ENCODE measurements at regions of chr10 and their contacts with region 1.

Region 1: DNA sequence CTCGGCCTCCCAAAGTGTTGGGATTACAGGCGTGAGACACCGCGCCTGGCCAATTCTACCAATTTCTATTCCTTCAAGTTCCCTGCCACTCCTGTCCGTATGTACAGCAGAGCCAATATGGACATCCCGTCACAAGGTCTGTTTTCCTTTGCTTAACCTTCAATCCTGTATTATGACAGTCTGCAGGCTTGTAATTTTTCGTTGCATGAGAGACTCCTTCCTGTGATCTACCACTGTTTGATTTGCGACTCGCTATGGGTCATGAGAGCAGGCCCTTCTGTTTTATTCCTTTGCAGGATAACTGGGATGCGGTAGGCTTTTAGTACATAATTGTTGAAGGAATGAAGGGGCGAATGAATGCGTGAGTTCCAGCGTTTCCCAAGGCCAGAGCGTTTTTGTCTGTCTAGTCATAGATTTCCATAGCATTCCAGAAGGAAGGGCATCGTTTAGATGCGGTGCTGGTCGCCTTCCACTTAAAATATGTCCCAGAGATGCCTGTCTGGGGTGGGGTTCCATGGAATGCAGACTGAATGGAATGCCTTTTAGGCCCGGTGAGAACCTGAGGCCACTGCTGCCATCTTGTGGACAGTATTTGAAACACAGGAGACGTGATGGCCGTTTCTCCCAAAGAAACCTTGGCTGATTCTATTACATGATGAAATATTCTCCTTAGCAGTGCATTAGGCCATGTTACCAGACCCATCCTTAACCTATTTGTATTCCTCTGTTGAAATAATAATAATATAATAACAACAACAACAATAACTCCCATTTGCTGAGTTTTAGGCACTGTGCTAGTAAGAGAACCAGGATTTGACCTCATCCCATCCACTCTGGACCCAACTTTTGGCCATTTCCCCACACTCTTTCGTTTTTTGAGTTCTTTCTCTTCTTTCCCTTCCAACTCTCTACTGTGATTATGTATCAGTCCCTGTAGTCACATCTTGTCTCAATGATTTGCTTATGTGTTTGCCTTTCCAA is 193.2 kb downstream of the MYOF start:
- DNase-seq: peak; percentile 71
- ATAC-seq: no peak
- H3K4me3 Mint-ChIP-seq: no peak overlapping the region
- H3K27ac Mint-ChIP-seq: no peak overlapping the region
- H3K4me1 Mint-ChIP-seq: peaks cover 2% of the 10 kb centered on the region
- H3K27me3 Mint-ChIP-seq: peaks cover 2% of the 10 kb centered on the region

Region 2: DNA sequence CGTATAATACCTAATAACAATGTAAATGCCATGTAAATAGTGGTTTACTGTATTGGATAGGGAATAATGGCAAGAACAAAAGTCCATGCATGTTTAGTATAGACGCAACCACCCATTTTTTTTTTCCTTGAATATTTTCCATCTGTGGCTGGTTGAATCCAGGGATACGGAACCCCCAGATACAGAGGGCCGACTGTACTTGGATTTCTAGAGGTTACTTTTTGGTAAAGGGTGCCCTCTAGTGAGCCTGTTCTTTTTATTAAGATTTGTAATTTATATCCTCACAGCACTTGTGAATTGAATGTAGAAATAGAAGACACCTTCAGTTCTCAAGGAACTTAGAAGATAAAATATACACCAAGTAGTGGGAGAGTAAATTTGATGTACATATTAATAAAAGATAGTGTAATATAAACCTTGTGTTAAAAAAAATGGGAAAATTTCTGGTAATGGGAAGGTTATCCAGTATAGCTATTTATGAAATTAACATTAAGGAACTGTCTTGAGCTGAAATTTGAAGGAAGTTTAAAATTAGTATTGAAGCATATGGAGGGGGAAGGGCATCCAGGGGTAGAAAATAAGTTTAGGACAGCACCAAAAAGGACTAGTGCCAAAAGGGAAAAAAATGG is 408.6 kb before region 1 on chr10:
- CTCF ChIA-PET with region 1: no interaction called
- POLR2A ChIA-PET with region 1: no interaction called
- intact Hi-C with region 1: loop called in 1 of 2 experiments (anchors 10 kb)
- DNase-seq: no peak
- ATAC-seq: no peak
- H3K4me3 Mint-ChIP-seq: no peak overlapping the region
- H3K27ac Mint-ChIP-seq: no peak overlapping the region
- H3K4me1 Mint-ChIP-seq: peaks cover 27% of the 10 kb centered on the region
- H3K27me3 Mint-ChIP-seq: no peaks in the 10 kb centered on the region

Region 3: DNA sequence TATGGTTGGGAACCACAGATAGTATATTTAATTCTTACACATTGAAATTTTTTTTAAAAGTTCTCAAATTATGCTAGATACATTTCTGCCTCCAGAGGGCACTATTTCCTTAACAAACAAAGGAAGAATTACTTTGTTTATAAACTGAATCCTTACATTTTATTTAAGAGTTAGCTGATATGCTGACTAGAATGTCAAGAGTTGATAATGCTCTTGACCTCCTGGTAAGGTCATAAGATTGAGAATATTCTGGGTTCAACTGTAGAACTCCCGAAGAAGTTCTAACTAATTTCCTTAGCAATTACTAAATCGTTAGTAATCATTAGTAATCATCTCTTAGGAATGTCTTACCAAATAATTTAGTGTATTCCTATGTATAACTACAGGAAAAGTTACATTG is 323.6 kb before region 1 on chr10:
- CTCF ChIA-PET with region 1: interaction called, 3 read pairs
- POLR2A ChIA-PET with region 1: no interaction called
- intact Hi-C with region 1: loop called in 1 of 2 experiments (anchors 1 kb)
- DNase-seq: no peak
- ATAC-seq: no peak
- H3K4me3 Mint-ChIP-seq: no peak overlapping the region
- H3K27ac Mint-ChIP-seq: no peak overlapping the region
- H3K4me1 Mint-ChIP-seq: no peaks in the 10 kb centered on the region
- H3K27me3 Mint-ChIP-seq: no peaks in the 10 kb centered on the region

Region 4: DNA sequence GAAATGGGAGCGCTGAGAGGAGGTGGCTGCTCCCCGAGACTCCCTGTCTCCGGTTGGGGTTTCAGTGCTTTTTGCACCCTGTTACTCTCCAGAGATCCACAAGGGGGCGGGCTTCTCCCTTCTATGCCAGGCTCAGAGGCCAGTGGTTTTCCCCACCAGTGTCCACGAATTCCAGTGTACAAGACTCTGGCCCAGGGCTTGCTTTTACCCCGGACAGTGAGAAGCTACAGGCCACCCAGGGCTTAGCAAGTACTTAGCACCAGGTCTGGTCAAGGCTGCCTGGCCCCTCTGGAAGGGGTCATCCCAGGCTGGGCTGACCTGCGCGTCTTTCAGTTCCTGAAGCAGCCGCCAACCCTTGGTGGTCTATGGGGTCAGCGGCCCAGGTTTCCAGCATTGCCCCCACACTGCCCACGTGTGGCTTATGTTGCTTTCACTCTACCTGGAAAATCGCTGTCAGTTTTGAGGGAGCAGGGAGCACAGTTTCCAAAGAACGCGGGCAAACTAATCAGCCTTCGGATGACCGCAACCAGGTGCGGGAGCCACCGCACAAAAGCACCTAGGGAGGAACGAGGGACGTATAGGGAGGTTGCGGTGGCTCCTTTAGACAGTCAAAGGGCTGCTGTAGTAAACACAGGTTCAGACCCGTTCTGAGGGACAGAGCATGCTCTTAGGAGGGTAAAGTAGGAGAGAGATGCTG is 208.4 kb before region 1 on chr10:
- CTCF ChIA-PET with region 1: interaction called, 8 read pairs
- POLR2A ChIA-PET with region 1: no interaction called
- intact Hi-C with region 1: loop called (anchors 1 kb)
- DNase-seq: peak; percentile 72
- ATAC-seq: peak; percentile 70
- H3K4me3 Mint-ChIP-seq: no peak overlapping the region
- H3K27ac Mint-ChIP-seq: no peak overlapping the region
- H3K4me1 Mint-ChIP-seq: peaks cover 7% of the 10 kb centered on the region
- H3K27me3 Mint-ChIP-seq: peaks cover 45% of the 10 kb centered on the region

Region 5: GRCh38 chr10:93115661-93116383 is 173.1 kb before region 1 on chr10:
- CTCF ChIA-PET with region 1: interaction called, 7 read pairs
- POLR2A ChIA-PET with region 1: no interaction called
- intact Hi-C with region 1: loop called (anchors 1 to 5 kb)
- DNase-seq: peak; percentile 85
- ATAC-seq: peak; percentile 83
- H3K4me3 Mint-ChIP-seq: no peak overlapping the region
- H3K27ac Mint-ChIP-seq: no peak overlapping the region
- H3K4me1 Mint-ChIP-seq: peaks cover 11% of the 10 kb centered on the region
- H3K27me3 Mint-ChIP-seq: peaks cover 5% of the 10 kb centered on the region

Region 6: DNA sequence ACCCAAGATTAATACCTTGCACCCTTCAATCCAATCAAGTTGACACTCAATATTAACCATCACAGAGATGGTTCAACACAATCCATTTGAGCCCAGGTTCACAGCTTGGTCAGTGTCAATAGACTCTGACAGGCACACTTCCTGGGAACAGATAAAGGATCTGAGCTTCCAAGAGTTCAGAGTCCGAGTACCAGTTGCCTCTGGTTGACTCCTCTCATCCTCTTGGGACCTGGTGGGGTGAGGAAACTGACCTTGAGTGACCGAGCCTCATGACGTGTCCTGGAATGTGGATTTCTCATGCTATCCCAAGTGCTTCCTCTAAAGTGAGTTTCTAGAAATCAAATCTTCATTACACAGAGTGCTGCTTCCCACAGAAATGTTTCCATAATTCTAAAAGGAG is 53.3 kb before region 1 on chr10:
- CTCF ChIA-PET with region 1: no interaction called
- POLR2A ChIA-PET with region 1: no interaction called
- intact Hi-C with region 1: no loop called
- DNase-seq: no peak
- ATAC-seq: no peak
- H3K4me3 Mint-ChIP-seq: no peak overlapping the region
- H3K27ac Mint-ChIP-seq: no peak overlapping the region
- H3K4me1 Mint-ChIP-seq: no peaks in the 10 kb centered on the region
- H3K27me3 Mint-ChIP-seq: peaks cover 5% of the 10 kb centered on the region

Region 7: DNA sequence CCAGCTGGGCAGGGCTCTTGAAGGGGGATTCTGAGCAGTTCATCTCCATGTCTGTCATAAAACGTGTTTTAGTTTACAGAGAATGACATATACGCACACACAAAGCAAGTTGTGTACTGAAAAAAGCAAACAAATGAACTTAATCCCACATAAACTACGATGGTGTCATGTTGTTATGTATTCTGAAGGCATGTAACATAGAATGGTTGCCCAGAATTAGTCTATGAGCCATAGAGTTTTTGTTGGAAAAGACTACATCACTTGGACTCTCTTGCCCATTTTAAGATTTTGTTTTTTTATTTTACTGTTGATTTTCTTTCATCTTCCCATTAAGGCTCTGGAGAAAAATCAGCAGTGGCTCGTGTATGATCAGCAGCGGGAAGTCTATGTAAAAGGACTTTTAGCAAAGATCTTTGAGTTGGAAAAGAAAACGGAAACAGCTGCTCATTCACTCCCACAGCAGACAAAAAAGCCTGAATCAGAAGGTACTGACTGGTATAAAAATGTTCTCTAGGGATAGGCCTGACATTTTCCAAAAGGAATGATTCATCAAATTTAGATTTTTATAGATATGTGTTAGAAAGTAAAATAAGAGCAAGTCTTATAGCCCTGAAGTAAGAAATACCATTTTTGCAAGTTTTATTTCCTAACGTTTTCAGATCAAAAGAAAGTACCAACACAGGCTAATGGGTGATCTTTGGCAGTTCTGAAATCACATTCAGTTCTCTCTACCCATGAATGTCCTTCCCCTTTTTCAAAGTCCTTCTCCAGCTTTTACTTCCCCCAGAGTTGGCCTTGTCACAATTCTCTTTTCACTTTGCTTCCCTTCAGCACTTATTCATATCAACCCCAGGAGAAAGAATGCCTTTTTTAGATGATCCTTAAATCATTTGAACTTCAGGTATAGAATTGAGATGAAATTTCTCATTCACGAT is 226.4 kb after region 1 on chr10:
- CTCF ChIA-PET with region 1: no interaction called
- POLR2A ChIA-PET with region 1: no interaction called
- intact Hi-C with region 1: loop called in 1 of 2 experiments (anchors 5 kb)
- DNase-seq: no peak
- ATAC-seq: no peak
- H3K4me3 Mint-ChIP-seq: no peak overlapping the region
- H3K27ac Mint-ChIP-seq: no peak overlapping the region
- H3K4me1 Mint-ChIP-seq: peaks cover 5% of the 10 kb centered on the region
- H3K27me3 Mint-ChIP-seq: no peaks in the 10 kb centered on the region

Measured in activated CD4-positive, alpha-beta T cell treated with anti-CD3 and anti-CD28 coated beads for 36 hours (primary cell).